ENCODE measurements at regions of chr18 and their contacts with region 1.

Region 1: GRCh38 chr18:74495581-74496507 is at the start of gene CNDP2:
- DNase-seq: peak; percentile 100
- ATAC-seq: peak; percentile 97 to 98
- total RNA-seq, gene CNDP2: 71.1 to 79.4 TPM

Region 2: GRCh38 chr18:72700961-72701718 is 1794.7 kb before region 1 on chr18:
- intact Hi-C with region 1: no loop called
- DNase-seq: no peak
- ATAC-seq: no peak

Region 3: DNA sequence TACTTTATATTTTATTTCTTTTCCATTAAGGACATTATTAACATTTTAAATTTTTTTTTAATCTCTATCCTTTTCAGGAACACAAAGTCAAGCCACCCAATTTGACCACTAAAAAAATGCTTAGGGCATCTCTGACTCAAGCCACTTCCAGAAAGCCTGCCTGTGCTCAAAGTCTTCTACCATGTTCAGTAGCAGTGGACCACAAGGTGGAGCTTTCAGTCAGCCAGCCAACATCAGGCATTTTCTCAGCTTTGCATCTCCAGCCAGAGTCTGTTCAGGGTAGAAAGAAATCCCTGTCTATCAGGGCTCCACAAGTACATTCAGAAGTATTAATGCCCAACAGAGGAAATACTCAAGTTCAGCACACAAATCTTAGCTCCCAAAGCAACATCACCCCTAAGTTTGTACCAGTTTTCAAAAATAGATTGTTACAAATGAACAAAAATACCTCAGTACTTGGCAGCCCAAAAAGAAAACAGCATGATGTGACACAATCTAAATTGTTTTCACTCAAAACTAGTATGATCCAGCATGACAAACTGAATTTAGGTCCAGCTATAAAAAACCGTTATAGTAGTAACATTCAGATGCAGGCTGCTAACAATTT is 142.6 kb before region 1 on chr18:
- intact Hi-C with region 1: loop called (anchors 1 to 5 kb)
- DNase-seq: peak; percentile 62
- ATAC-seq: peak; percentile 91 to 93

Region 4: GRCh38 chr18:74546751-74547550 is 51.1 kb after region 1 on chr18:
- intact Hi-C with region 1: loop called (anchors 5 to 10 kb)
- DNase-seq: peak; percentile 63
- ATAC-seq: peak; percentile 47 to 74

Region 5: DNA sequence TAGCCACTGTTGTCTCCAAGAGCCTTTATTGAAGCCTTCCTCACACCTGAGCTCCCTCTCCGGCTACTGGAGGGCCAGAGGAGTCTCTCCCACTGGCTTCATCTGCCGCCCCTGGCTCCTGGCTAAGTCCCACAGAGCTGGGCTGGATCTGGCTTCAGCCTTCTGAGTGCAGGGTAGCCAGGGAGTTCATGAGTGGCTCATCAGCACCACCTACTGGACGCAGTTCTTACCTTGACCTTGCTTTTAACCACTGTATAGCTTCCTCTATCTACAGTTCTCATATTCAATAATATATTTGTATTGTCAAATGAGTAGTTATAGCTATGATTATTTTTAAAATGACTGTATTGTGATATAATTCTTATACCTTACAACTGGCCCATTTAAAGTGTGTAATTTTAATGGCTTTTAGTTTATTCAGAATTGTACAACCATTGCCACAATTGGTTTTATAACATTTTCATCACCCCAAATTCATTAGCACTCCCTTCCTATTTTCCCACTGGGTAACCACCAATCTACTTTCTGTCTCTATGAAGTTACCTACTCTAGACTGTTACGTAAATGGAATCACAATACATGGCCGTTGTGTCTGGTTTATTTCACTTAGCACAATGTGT is 56.2 kb after region 1 on chr18:
- intact Hi-C with region 1: loop called (anchors 5 to 10 kb)
- DNase-seq: peak; percentile 86
- ATAC-seq: peak; percentile 95 to 96

Region 6: DNA sequence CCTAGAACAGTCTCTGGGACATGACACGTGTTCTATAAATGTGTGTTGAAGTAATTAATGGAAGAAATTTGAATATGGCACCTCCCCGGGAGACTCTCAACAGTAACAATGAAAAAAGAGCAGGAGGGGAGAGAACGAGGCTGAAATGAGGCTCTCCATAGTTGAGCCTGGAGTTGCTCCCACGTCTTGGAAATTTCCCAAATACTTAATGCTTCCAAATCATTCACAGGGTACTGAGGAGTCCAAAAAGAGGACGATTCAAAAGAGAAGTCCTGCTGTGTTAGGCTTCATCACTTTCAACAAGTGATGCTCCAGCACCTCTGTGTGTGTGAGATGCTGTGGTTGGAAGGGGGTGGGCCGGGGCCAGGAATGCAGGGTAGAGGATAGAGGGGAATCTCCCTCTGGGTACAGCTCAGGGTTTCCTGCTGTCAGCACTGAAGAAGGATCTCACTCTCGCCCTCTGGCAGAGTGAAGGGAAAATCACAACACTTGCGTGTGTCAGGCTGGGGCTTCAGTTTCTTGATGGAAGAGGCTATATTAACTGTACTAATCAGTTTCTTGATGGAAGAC is 83.7 kb after region 1 on chr18:
- intact Hi-C with region 1: no loop called
- DNase-seq: no peak
- ATAC-seq: peak; percentile 62 to 70